BJ (cell line): ENCODE measurements at regions of chrX and their contacts with region 1.

Region 1: GRCh38 chrX:23907498-23908218 is at the starts of genes APOO and CXorf58:
- DNase-seq: no peak
- H3K4me3 ChIP-seq: peak within 1 kb of the TSS; percentile 59
- H3K27me3 ChIP-seq: no peaks in the 10 kb centered on the region
- CTCF ChIP-seq: peak; percentile 74
- polyA plus RNA-seq, gene APOO: 6.6 and 10.0 TPM in 2 replicates
- polyA plus RNA-seq, gene CXorf58: not detected in 2 replicates

Region 2: GRCh38 chrX:23871905-23872546 is 35.6 kb before region 1 on chrX:
- CTCF ChIA-PET with region 1: no interaction called
- POLR2A ChIA-PET with region 1: no interaction called
- DNase-seq: no peak
- H3K4me3 ChIP-seq: no peak overlapping the region
- H3K27me3 ChIP-seq: no peaks in the 10 kb centered on the region
- CTCF ChIP-seq: no peak

Region 3: DNA sequence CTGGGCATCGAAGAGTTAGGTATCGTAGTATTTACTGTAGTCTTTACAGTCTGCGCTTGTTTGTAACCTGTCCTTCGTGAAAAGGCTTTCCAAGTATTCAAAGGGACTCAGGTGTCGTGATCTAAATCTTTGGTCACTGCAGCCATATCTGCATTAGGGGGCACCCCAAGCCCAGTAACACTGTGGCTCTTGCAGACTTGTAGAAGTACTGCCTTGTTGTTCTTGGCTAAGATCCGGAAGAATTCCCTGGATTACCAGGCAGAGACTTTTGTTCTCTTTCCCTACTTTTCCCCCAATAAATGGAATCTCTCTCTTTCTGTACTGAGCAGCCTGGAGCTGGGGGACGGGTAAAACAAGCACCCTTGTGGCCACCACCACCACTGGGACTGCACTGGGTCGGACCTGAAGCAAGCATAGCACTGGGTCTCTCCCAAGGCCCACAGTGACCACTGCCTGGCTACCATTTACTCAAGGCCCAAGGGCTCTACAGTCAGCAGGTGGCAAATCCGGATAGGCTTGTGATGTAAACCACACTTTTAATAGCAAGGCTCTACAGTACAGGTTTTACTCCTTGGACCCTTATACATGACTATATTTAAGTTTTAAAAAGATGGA is 12.2 kb after region 1 on chrX:
- CTCF ChIA-PET with region 1: no interaction called
- POLR2A ChIA-PET with region 1: interaction called, 11 read pairs
- DNase-seq: no peak
- H3K4me3 ChIP-seq: no peak overlapping the region
- H3K27me3 ChIP-seq: no peaks in the 10 kb centered on the region
- CTCF ChIP-seq: no peak

Region 4: DNA sequence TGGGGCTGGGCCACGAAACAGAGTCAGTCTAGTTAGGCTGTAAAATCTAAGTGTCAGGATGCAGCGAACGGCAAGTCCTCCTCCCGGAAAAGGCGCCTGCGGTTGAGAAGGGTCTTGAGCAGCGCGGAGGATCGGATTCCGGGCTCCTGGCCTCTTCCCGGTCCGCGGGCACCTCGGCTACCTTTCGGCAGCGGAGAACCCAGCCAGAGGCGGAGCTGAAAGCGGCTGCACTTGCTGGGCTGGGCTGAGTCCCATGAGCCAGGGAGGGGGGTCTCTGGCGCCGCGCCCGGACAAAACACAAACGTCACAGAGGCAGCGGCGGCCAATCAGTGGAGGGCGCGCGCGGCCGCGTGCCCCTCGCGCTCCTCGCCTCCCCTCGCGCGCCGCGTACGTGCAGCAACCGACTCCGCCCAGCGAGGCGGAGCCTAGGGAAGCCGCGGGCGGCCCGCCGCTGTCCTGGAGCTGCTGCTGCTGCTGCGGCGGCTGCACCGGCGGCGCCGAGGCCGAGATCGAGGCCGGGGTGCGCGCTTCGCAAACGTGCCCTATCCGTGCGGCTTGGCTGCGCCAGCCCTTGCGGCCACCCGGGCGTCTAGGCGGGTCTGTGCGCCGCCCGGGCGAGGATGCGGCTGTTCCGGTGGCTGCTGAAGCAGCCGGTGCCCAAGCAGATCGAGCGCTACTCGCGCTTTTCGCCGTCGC is 557.3 kb after region 1 on chrX and contains the start of gene PDK3:
- CTCF ChIA-PET with region 1: no interaction called
- POLR2A ChIA-PET with region 1: no interaction called
- DNase-seq: peak; percentile 27
- H3K4me3 ChIP-seq: peak within 1 kb of the TSS; percentile 56
- H3K27me3 ChIP-seq: no peaks in the 10 kb centered on the region
- CTCF ChIP-seq: no peak
- polyA plus RNA-seq, gene PDK3: 2.4 and 5.3 TPM in 2 replicates